GM13976 (cell line): ENCODE measurements at regions of chr16 and their contacts with region 1.

Region 1: DNA sequence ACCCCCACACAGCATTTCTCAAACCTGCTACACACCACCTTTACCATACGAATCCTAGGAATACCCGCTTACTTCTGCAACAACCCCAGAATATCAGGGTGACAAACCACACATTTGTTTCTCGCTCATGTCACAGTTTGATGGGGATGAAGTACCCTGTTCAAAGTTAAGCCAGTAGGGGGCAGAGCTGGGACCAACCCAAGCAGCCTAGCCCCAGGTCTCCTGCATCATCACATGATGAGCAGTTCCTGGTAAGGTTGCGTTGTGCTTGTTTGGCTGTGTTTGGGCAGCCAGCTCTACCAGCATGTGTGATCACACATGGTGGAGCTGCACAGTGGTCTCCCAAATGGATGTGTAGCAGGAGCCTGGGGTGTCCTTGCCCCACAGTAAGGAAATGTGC is 103.6 kb upstream of the C16orf82 start:
- DNase-seq: no peak
- CTCF ChIP-seq: peak; percentile 7

Region 2: GRCh38 chr16:26240807-26241206 is 722.3 kb before region 1 on chr16:
- in situ Hi-C with region 1: no loop called
- DNase-seq: no peak
- CTCF ChIP-seq: no peak

Region 3: GRCh38 chr16:26905336-26905735 is 57.8 kb before region 1 on chr16:
- in situ Hi-C with region 1: loop called (anchors 10 kb)
- DNase-seq: no peak
- CTCF ChIP-seq: no peak